Transverse colon (tissue), 4 donors: ENCODE measurements at regions of chr7 and their contacts with region 1.

Region 1: DNA sequence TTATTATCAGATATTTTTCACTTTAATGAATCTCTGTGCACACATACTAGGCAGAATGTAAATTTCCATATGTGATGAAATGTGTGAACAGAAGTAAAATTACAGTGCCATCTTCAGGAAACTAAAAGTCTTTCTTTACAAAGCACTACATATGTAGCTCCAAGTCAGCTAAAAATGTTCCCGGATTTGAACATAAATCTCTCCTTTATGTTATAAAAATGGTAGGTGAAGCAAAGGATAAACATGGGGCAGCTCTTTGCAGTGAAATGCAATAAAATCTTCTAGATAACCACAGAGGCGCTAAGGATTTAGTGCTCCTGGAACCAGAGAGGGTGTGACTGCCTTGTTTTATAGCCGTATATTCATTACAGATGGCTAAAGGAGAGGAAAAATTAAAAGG is 104.9 kb upstream of the C7orf33 start:
- DNase-seq: peak; percentile 13
- H3K4me3 ChIP-seq: no peak overlapping the region
- H3K27ac ChIP-seq: peak overlapping the region; percentile 27 to 72 (median 44)
- H3K4me1 ChIP-seq: peaks cover 12 to 25% (median 16%) of the 10 kb centered on the region in 4 donors
- H3K27me3 ChIP-seq: no peaks in the 10 kb centered on the region
- CTCF ChIP-seq: peak in 2 of 5 experiments; percentile 10 to 21
- EP300 ChIP-seq: no peak
- POLR2A ChIP-seq: no peak

Region 2: GRCh38 chr7:148262721-148263229 is 222.8 kb before region 1 on chr7:
- in situ Hi-C with region 1: loop called in 2 of 4 experiments (anchors 25 kb)
- intact Hi-C with region 1: no loop called
- DNase-seq: peak; percentile 71
- H3K4me3 ChIP-seq: peak overlapping the region in 1 of 4 donors; percentile 29
- H3K27ac ChIP-seq: no peak overlapping the region
- H3K4me1 ChIP-seq: peaks cover 0 to 6% (median 2%) of the 10 kb centered on the region in 4 donors
- H3K27me3 ChIP-seq: peaks cover 3% of the 10 kb centered on the region
- CTCF ChIP-seq: peak; percentile 87 to 95 (median 94)
- EP300 ChIP-seq: no peak
- POLR2A ChIP-seq: no peak

Region 3: GRCh38 chr7:148436571-148436970 is 49.0 kb before region 1 on chr7:
- in situ Hi-C with region 1: no loop called
- intact Hi-C with region 1: no loop called
- DNase-seq: no peak
- H3K4me3 ChIP-seq: no peak overlapping the region
- H3K27ac ChIP-seq: no peak overlapping the region
- H3K4me1 ChIP-seq: peaks cover 0 to 13% (median 8%) of the 10 kb centered on the region in 4 donors
- H3K27me3 ChIP-seq: no peaks in the 10 kb centered on the region
- CTCF ChIP-seq: no peak
- EP300 ChIP-seq: no peak
- POLR2A ChIP-seq: no peak

Region 4: GRCh38 chr7:148650232-148650858 is 164.7 kb after region 1 on chr7:
- in situ Hi-C with region 1: no loop called
- intact Hi-C with region 1: no loop called
- DNase-seq: no peak
- H3K4me3 ChIP-seq: no peak overlapping the region
- H3K27ac ChIP-seq: no peak overlapping the region
- H3K4me1 ChIP-seq: no peaks in the 10 kb centered on the region
- H3K27me3 ChIP-seq: peaks cover 3% of the 10 kb centered on the region
- CTCF ChIP-seq: no peak
- EP300 ChIP-seq: no peak
- POLR2A ChIP-seq: no peak